Gastrocnemius medialis (tissue), 4 donors: ENCODE measurements at regions of chr9 and their contacts with region 1.

Region 1: DNA sequence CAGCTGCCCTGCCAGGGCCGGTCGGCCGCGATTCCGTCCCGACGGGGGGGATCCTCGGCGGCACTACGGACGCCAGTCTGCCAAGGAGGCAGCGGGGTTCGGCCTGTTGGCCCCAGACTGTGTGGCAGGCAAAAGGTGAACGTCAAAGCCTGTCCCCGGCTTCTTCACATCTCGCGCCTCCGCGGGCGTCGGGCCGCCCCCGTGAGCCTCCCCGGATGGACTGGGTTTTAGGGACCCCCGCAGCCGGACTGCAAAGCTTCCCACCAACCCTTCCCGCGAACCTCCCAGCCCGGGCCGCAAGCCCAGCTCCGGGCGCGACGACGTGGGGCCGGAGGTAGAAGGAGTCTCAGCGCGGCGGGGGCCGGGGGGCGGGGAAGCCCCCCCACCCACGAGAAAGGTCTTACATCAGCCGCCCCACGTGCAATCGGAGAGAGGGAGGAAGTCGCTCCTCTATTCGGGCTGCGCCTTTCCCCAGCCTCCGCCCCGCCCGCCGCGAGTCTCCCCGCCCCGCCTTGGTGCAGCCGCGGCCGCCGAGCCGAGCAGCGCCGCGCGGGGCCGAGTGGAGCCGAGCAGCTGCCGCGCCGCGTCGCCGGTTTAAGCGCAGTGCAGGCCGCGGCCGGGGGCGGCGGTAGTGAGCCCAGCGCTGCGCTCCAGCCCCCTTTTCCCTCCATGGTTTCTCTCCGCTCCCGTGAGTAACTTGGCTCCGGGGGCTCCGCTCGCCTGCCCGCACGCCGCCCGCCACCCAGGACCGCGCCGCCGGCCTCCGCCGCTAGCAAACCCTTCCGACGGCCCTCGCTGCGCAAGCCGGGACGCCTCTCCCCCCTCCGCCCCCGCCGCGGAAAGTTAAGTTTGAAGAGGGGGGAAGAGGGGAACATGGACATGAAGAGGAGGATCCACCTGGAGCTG is at the start of gene ANP32B:
- DNase-seq: peak; percentile 73 to 85
- ATAC-seq: peak; percentile 55 to 59
- H3K4me3 ChIP-seq: peak within 1 kb of the TSS; percentile 84 to 99 (median 89)
- H3K27ac ChIP-seq: peak within 1 kb of the TSS; percentile 93 to 99 (median 96)
- H3K4me1 ChIP-seq: peaks cover 48 to 55% of the 10 kb centered on the region in 2 donors
- H3K27me3 ChIP-seq: no peaks in the 10 kb centered on the region
- CTCF ChIP-seq: peak; percentile 73 to 99 (median 97)
- POLR2A ChIP-seq: peak; percentile 58 to 63
- total RNA-seq, gene ANP32B: 8.2 to 24.5 (median 17.8) TPM

Region 2: DNA sequence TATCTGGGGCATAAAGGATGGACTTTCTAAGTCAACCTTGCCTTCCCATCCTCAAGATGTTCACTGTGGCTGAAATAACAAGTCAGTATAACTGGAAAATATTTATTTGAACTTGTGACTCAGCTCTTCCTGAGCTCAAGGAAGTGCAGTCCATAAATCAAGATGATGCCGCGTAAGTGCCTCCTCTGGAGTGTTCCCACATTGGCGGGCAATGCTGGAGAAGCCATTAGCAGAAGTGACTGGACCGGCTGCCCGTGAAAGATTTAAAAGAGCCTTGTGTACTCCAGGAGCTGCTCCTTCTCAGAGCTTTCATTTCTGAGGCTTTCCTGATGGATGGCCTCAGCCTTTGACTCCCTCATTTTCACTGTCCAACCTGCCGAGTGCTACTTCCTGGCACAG is 464.0 kb before region 1 on chr9:
- in situ Hi-C with region 1: no loop called
- intact Hi-C with region 1: no loop called
- DNase-seq: peak; percentile 71 to 77
- ATAC-seq: peak; percentile 62 to 75
- H3K4me3 ChIP-seq: peak overlapping the region in 1 of 4 donors; percentile 31
- H3K27ac ChIP-seq: peak overlapping the region; percentile 89 to 98 (median 96)
- H3K4me1 ChIP-seq: peaks cover 83 to 97% of the 10 kb centered on the region in 2 donors
- H3K27me3 ChIP-seq: no peaks in the 10 kb centered on the region
- CTCF ChIP-seq: no peak
- POLR2A ChIP-seq: no peak

Region 3: DNA sequence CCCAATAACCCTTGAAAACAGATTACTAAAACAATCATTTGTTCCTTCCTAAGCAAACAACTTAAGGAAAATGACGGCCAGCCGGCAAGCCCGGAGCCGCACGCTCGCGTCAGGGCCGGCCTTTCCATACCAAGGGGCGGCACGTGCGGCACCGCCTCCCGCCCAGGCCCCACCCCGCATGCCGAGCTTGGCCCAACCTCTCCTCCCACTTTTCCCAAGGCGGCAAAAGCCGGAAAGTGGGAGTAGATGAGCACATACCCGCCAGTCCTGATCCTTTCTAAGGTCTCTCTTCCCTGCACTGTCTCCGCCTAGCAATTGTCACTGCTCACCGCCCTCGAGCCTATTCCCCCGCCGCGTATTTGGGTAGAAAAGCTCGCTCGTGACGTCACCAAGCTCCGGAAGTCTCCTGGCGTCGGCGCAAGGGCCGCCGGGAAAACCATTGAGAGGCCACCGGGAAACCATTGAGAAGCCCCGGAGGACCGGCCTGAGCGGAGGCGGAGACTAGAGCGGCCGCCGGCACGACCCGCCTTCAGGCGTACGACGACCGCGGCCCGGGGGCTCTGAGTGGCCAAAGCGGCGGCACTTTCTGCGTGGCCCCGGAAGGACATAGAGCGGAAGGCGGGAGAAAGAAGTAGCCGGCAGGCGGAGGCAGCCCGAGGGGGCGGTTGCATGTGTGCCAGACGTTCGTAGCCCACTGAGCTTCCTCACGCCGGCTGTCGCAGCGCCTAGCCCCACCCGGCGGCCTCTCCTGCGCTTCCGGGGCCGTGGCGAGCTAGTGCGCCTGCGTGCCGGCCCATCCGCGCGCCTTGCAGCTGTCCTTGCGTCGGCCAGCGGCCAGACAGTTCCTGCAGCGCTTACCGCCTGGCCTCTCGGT is 349.7 kb before region 1 on chr9 and contains the starts of genes NCBP1 and TSTD2:
- in situ Hi-C with region 1: no loop called
- intact Hi-C with region 1: loop called (anchors 10 kb)
- DNase-seq: peak; percentile 96 to 98
- ATAC-seq: peak; percentile 87 to 88
- H3K4me3 ChIP-seq: peak within 1 kb of the TSS; percentile 86 to 92 (median 88)
- H3K27ac ChIP-seq: peak within 1 kb of the TSS; percentile 91 to 99 (median 98)
- H3K4me1 ChIP-seq: peaks cover 53 to 56% of the 10 kb centered on the region in 2 donors
- H3K27me3 ChIP-seq: no peaks in the 10 kb centered on the region
- CTCF ChIP-seq: peak in 1 of 5 experiments; percentile 8
- POLR2A ChIP-seq: peak; percentile 83 to 87
- total RNA-seq, gene NCBP1: 8.2 to 17.2 (median 15.7) TPM
- total RNA-seq, gene TSTD2: 11.6 to 19.9 (median 14.5) TPM

Region 4: GRCh38 chr9:97958812-97959511 is 24.0 kb before region 1 on chr9:
- in situ Hi-C with region 1: no loop called
- intact Hi-C with region 1: no loop called
- DNase-seq: no peak
- ATAC-seq: no peak
- H3K4me3 ChIP-seq: no peak overlapping the region
- H3K27ac ChIP-seq: no peak overlapping the region
- H3K4me1 ChIP-seq: peaks cover 0 to 4% of the 10 kb centered on the region in 2 donors
- H3K27me3 ChIP-seq: no peaks in the 10 kb centered on the region
- CTCF ChIP-seq: no peak
- POLR2A ChIP-seq: no peak